ENCODE measurements at regions of chr2 and their contacts with region 1.

Region 1: GRCh38 chr2:20661067-20661980 is 5.6 kb upstream of the GDF7 start:
- H3K4me3 ChIP-seq: no peak overlapping the region
- H3K27ac ChIP-seq: no peak overlapping the region
- H3K4me1 ChIP-seq: no peaks in the 10 kb centered on the region
- CTCF ChIP-seq: peak; percentile 86

Region 2: DNA sequence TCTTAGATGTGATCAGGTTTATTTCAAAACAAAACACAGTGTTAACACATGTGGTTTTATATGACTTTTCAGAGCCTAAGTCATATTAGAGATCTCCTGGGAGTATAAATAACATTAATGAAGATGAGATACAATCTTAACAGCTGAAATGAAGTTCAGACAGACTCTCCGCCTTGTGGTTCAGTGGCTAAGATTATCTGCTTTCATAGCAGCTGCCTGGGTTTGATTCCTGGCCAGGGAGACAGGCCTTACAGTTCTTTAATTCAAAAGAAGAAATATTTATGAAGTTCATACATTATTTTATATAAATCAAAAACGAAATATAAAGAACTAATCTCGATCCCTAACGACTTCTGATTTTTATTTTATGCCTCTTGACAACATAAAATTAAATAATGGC is 724.3 kb before region 1 on chr2:
- CTCF ChIA-PET with region 1: no interaction called
- POLR2A ChIA-PET with region 1: no interaction called
- H3K4me3 ChIP-seq: no peak overlapping the region
- H3K27ac ChIP-seq: no peak overlapping the region
- H3K4me1 ChIP-seq: peaks cover 3% of the 10 kb centered on the region; the same call in 1 of the 2 replicates
- CTCF ChIP-seq: no peak

Region 3: GRCh38 chr2:20617892-20618467 is 43.3 kb before region 1 on chr2:
- CTCF ChIA-PET with region 1: no interaction called
- POLR2A ChIA-PET with region 1: no interaction called
- H3K4me3 ChIP-seq: no peak overlapping the region
- H3K27ac ChIP-seq: no peak overlapping the region; the same call in 1 of the 2 replicates
- H3K4me1 ChIP-seq: peaks cover 7% of the 10 kb centered on the region; the same call in 1 of the 2 replicates
- CTCF ChIP-seq: 0 out of 2 replicates have a peak, but pooled peaks have one; percentile 27

Region 4: DNA sequence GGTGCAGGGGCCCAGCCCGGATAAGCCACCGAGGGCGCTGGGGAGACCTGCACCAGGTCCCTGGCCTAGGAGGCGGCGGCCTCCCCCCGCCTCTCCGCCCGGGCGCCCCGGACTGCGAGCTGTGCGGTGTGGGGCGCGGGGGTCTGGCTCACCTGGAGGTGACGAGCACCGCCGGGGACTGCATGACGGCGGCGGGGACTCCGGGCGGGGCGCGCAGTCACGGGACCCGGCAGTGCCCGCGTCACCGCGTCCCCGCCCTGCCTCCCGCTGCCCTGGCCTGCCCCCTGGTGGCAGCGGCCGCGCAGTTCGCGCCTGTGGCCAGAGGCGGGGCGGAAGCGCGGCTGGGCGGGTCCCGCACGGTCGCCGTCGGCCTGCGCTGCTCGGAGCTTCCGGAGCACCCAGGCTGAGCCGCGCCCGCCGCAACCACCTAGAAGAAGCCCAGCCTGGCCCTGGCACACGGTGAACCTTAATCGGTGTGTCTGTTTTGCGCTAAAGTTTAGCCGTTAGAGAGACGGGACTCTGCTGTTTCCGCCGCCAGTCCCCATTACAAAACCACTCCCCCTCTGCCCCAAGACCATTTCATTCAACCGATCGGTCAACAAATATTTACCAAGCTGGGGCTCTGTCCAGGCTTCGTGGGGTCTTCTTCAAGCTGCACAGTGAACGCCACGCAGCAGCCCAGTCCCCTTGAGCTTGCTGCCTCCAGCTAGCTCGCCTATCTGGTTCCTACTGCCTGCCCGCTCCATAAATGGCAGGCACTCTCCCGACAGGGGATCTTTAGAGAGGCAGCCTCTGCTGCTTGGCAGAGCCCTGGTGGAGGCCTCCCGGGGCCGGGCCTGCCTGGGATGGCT is 10.2 kb before region 1 on chr2 and contains the start of gene HS1BP3:
- CTCF ChIA-PET with region 1: interaction called, 57 read pairs
- POLR2A ChIA-PET with region 1: interaction called, 7 read pairs
- H3K4me3 ChIP-seq: peak within 1 kb of the TSS; percentile 66
- H3K27ac ChIP-seq: peak within 1 kb of the TSS; percentile 43; the same call in 1 of the 2 replicates
- H3K4me1 ChIP-seq: no peaks in the 10 kb centered on the region
- CTCF ChIP-seq: no peak; the same call in 1 of the 2 replicates

Region 5: DNA sequence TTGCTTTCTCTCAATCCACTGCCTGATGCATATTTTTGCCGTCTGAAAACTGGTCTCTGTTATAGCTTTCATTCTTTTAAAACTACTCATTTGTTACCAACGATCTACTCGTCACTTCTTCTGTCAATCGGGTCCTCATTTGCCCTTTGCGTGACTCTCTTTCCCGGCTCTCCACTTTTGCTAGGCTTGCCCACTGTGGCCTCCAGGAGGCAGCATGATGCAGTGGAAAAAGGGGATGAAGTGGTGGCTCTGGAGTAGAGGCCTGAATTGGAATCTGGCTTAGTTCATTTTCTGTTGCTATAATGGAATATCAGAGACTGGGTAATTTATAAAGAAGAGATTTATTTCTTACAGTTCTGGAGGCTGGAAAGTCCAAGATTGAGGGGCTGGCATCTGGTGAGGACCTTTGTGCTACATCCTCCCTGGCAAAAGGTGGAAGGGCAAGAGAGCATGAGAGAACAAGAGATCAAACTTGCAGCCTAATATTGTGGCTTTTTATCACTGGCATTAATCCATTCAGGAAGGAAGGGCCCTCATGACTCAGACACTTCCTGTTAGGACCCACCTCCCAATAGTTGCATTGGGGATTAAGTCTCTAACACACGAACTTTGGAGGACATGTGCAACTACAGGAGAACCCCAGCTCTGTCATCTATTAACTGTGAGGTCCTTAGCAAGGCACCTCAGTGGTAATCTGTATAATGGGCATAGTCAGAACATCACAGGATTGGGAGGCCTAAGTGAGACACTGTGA is 21.0 kb after region 1 on chr2:
- CTCF ChIA-PET with region 1: interaction called, 60 read pairs
- POLR2A ChIA-PET with region 1: no interaction called
- H3K4me3 ChIP-seq: no peak overlapping the region
- H3K27ac ChIP-seq: no peak overlapping the region
- H3K4me1 ChIP-seq: no peaks in the 10 kb centered on the region
- CTCF ChIP-seq: no peak

Region 6: GRCh38 chr2:20737505-20737904 is 76.2 kb after region 1 on chr2:
- CTCF ChIA-PET with region 1: no interaction called
- POLR2A ChIA-PET with region 1: no interaction called
- H3K4me3 ChIP-seq: no peak overlapping the region
- H3K27ac ChIP-seq: no peak overlapping the region
- H3K4me1 ChIP-seq: no peaks in the 10 kb centered on the region
- CTCF ChIP-seq: no peak

Region 7: GRCh38 chr2:20962939-20963557 is 301.7 kb after region 1 on chr2:
- CTCF ChIA-PET with region 1: interaction called, 147 read pairs
- POLR2A ChIA-PET with region 1: no interaction called
- H3K4me3 ChIP-seq: no peak overlapping the region
- H3K27ac ChIP-seq: no peak overlapping the region
- H3K4me1 ChIP-seq: no peaks in the 10 kb centered on the region
- CTCF ChIP-seq: peak; percentile 76

Region 8: DNA sequence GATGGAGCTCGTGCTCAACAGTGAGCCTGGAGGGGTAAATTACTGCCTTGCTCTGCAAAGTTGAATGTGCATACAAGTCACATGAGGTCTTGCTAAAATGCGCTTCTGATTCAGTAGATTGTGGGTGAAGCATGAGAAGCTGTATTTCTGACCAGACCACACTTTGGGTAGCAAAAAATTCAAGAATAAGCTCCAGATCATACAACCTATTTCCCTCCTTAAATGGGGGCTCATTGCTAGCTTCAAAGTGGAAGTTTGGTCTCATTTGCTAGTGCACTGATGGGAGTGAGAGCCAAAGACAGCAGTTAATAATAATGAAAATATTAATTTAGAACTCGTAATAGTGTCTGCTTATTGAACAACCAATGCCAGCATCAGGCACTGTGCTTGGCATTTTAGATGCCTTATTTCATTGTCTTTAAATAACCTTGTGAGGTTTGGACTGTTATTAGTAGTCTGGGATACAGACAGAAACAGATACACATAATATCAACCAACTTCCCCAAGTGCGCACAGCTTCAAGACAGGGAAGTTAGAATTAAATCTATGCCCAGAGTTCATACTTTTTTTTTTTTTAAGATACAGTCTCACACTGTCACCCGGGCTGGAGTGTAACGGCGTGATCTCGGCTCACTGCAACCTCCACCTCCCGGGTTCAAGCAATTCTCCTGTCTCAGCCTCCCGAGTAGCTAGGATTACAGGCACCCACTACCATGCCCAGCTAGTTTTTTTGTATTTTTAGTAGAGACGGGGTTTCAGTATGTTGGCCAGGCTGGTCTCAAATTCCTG is 364.6 kb after region 1 on chr2:
- CTCF ChIA-PET with region 1: interaction called, 10 read pairs
- POLR2A ChIA-PET with region 1: no interaction called
- H3K4me3 ChIP-seq: no peak overlapping the region
- H3K27ac ChIP-seq: no peak overlapping the region
- H3K4me1 ChIP-seq: no peaks in the 10 kb centered on the region
- CTCF ChIP-seq: no peak

Region 9: GRCh38 chr2:21118302-21118920 is 457.1 kb after region 1 on chr2:
- CTCF ChIA-PET with region 1: interaction called, 35 read pairs
- POLR2A ChIA-PET with region 1: no interaction called
- H3K4me3 ChIP-seq: no peak overlapping the region
- H3K27ac ChIP-seq: no peak overlapping the region
- H3K4me1 ChIP-seq: no peaks in the 10 kb centered on the region
- CTCF ChIP-seq: 0 out of 2 replicates have a peak, but pooled peaks have one; percentile 19